Left ventricle myocardium superior (tissue), 1 donor: ENCODE measurements at regions of chr15 and their contacts with region 1.

Region 1: GRCh38 chr15:88615303-88616107 is 5.6 kb upstream of the AEN start:
- DNase-seq: no peak
- ATAC-seq: no peak

Region 2: GRCh38 chr15:88476635-88477060 is 138.9 kb before region 1 on chr15:
- intact Hi-C with region 1: loop called (anchors 2 kb)
- DNase-seq: peak; percentile 53
- ATAC-seq: peak; percentile 88

Region 3: GRCh38 chr15:89346516-89347231 is 731.2 kb after region 1 on chr15:
- intact Hi-C with region 1: no loop called
- DNase-seq: no peak
- ATAC-seq: peak; percentile 35